GM13977 (cell line): ENCODE measurements at regions of chr17 and their contacts with region 1.

Region 1: GRCh38 chr17:59435238-59435637 is 103.8 kb downstream of the YPEL2 start:
- DNase-seq: no peak
- CTCF ChIP-seq: no peak

Region 2: DNA sequence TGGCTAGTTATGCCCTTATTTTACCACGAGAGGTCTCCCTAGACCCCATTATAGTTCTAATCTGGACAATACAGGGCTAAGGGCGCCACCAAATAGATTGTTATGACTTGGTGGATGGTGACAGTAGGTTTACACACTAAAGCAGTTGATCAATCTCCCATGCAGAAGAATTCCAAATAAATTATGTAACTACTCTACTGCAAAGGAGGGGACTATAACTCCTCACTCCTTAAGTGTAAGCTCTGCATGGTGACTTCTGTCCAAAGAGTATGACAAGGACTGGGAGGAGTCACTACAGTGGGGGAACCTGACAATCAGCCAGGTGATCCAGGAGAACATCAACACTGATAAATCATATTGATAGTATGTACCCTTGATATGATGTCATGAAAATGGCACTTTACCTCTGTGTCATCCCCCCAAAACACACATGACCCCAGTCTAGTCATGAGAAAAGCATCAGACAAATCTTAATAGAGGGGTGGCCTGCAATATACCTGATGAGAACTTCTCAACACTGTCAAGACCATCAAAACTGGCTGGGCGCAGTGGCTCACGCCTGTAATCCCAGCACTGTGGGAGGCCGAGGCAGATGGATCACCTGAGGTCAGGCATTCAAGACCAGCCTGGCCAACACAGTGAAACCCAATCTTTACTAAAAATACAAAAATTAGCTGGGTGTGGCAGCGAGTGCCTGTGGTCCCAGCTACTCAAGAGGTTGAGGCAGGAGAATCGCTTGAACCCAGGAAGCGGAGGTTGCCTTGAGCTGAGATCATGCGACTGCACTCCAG is 123.9 kb before region 1 on chr17:
- in situ Hi-C with region 1: loop called (anchors 5 kb)
- DNase-seq: peak; percentile 74
- CTCF ChIP-seq: peak; percentile 80

Region 3: GRCh38 chr17:59815965-59816364 is 380.7 kb after region 1 on chr17:
- in situ Hi-C with region 1: no loop called
- DNase-seq: no peak
- CTCF ChIP-seq: no peak